Esophagus muscularis mucosa (tissue), 4 donors: ENCODE measurements at regions of chr15 and their contacts with region 1.

Region 1: DNA sequence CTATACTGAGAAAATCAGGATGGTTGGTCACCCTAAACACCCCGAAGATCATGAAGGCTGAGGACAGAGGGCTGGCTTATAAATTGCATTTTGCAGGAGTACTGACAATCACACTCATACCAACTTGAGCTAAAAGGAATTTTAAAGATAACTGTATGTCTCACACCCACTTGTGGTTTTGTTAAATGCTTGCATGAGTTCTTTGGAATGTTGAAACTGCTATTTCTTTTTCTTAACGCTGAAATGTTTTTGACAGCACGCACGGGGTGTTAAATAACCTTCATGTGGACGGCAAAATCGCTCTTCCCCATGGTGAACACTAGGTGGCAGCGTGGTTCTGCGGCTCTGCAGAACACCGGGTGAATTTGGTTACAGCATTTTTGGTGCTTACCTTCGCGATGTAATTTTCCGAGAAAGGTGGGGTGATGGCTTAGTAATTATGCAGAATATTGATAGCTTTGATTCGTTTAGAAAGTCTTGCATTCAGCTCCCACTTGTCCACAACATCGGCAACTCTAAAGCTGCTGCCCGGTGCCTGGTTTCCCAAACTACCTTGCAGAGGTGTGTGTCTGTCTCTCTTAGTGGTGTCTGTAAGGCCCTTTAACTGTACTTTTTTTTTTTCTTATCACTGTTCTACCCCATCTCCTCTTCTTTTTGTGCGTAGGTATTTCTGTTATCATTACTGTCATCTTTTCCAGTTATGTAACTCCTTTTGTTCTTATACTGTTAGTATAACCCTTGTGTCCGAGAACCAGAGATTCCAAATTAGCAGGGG is 51.7 kb downstream of the ARNT2 start:
- DNase-seq: no peak
- H3K4me3 ChIP-seq: no peak overlapping the region
- H3K27ac ChIP-seq: no peak overlapping the region
- H3K4me1 ChIP-seq: peaks cover 0 to 25% (median 22%) of the 10 kb centered on the region in 4 donors
- H3K27me3 ChIP-seq: no peaks in the 10 kb centered on the region
- CTCF ChIP-seq: peak; percentile 93 to 95 (median 95)
- EP300 ChIP-seq: no peak
- POLR2A ChIP-seq: no peak

Region 2: GRCh38 chr15:80502782-80503181 is 46.9 kb after region 1 on chr15:
- intact Hi-C with region 1: no loop called
- DNase-seq: peak; percentile 90
- H3K4me3 ChIP-seq: no peak overlapping the region
- H3K27ac ChIP-seq: peak overlapping the region in 3 of 4 donors; percentile 9 to 52 (median 27)
- H3K4me1 ChIP-seq: peaks cover 3 to 38% (median 24%) of the 10 kb centered on the region in 4 donors
- H3K27me3 ChIP-seq: no peaks in the 10 kb centered on the region
- CTCF ChIP-seq: no peak
- EP300 ChIP-seq: no peak
- POLR2A ChIP-seq: no peak

Region 3: DNA sequence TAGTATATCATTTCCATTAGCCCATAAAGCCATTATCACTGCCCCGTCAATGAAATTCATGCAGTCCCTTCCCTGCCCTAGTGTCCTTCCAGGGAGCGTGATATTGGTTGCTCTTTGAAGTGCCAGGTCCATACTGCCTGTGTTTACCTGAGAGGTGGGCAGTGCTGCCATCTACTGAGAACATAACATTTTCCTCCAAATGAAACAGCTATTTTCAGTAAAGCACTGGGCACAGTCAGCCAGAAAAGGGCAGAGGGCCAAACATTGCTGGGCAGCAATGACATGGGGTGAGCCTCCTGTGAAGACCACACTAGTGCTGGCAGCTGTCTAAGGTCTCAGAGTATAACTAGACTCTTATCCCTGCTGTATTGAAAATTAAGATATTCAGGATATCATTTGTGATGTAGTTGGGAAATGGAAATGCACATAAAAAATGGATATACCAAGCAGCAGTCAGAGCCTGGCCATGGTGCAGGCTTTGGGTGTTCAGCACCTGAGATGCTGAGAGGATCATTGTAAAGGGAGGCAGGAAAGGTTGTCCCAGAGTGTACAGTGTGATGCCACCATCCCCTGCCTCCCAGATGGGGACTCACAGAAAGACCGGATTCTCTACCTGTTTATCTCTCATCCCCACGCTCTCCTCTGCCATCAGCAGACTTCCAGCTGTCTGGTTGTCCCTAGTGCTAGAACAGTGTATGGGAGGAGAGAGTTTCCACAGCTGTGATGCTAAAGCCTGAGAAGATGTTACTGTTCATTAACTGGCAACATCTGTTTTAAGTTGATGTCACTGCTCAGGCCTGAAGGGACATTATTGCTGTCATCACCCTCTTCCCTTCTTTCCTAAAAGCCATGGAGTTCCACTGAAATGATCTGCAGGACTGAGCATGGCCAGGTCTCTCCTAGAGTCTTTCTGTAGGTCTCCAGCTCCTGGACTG is 57.1 kb after region 1 on chr15:
- intact Hi-C with region 1: loop called (anchors 1 kb)
- DNase-seq: peak; percentile 84
- H3K4me3 ChIP-seq: no peak overlapping the region
- H3K27ac ChIP-seq: no peak overlapping the region
- H3K4me1 ChIP-seq: peaks cover 6 to 19% (median 7%) of the 10 kb centered on the region in 4 donors
- H3K27me3 ChIP-seq: no peaks in the 10 kb centered on the region
- CTCF ChIP-seq: peak; percentile 20 to 44 (median 21)
- EP300 ChIP-seq: no peak
- POLR2A ChIP-seq: no peak

Region 4: GRCh38 chr15:80567721-80568157 is 111.9 kb after region 1 on chr15:
- intact Hi-C with region 1: loop called (anchors 2 kb)
- DNase-seq: no peak
- H3K4me3 ChIP-seq: no peak overlapping the region
- H3K27ac ChIP-seq: no peak overlapping the region
- H3K4me1 ChIP-seq: peaks cover 0 to 12% (median 8%) of the 10 kb centered on the region in 4 donors
- H3K27me3 ChIP-seq: no peaks in the 10 kb centered on the region
- CTCF ChIP-seq: peak; percentile 62 to 73 (median 62)
- EP300 ChIP-seq: no peak
- POLR2A ChIP-seq: no peak

Region 5: GRCh38 chr15:80615761-80616391 is 160.0 kb after region 1 on chr15:
- intact Hi-C with region 1: loop called (anchors 5 kb)
- DNase-seq: peak; percentile 92
- H3K4me3 ChIP-seq: no peak overlapping the region
- H3K27ac ChIP-seq: peak overlapping the region in 3 of 4 donors; percentile 32 to 58 (median 44)
- H3K4me1 ChIP-seq: peaks cover 9 to 23% (median 13%) of the 10 kb centered on the region in 4 donors
- H3K27me3 ChIP-seq: no peaks in the 10 kb centered on the region
- CTCF ChIP-seq: no peak
- EP300 ChIP-seq: no peak
- POLR2A ChIP-seq: no peak

Region 6: GRCh38 chr15:80776420-80777045 is 320.7 kb after region 1 on chr15:
- intact Hi-C with region 1: loop called (anchors 1 kb)
- DNase-seq: peak; percentile 93
- H3K4me3 ChIP-seq: no peak overlapping the region
- H3K27ac ChIP-seq: no peak overlapping the region
- H3K4me1 ChIP-seq: peaks cover 27 to 38% (median 32%) of the 10 kb centered on the region in 4 donors
- H3K27me3 ChIP-seq: peaks cover 0 to 36% (median 18%) of the 10 kb centered on the region in 4 donors
- CTCF ChIP-seq: peak; percentile 81 to 87 (median 84)
- EP300 ChIP-seq: no peak
- POLR2A ChIP-seq: no peak

Region 7: DNA sequence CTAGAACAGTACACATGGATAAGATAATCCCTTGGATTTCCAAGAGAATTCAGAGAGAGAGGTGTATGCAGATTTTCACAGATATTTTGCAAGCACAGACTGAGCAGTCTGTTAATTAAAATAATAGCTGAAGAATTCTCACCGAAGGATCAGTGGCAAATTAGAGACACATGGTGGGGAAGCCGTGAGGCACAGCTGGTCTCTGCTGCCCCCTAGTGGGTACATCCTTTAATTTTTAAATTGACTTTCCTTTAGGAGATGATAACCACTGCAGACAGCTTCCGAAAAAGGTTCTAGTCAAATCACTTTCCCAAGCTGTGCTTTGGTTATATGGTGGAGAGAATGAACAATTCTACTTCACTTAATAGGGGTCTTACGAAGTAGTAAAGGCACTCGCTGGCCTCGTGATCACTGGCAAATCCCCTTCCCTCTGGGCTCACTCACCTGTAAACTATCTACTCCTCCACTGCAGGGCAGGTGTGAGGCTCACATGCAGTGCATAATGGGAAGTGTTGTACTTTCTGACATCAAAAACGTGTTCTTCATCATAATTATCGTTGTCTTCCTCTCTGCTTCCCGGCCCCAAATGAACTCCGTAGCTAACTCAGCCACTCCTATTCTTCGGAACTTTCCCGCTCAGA is 514.3 kb after region 1 on chr15:
- intact Hi-C with region 1: loop called (anchors 2 kb)
- DNase-seq: no peak
- H3K4me3 ChIP-seq: no peak overlapping the region
- H3K27ac ChIP-seq: no peak overlapping the region
- H3K4me1 ChIP-seq: peaks cover 4 to 19% (median 15%) of the 10 kb centered on the region in 4 donors
- H3K27me3 ChIP-seq: no peaks in the 10 kb centered on the region
- CTCF ChIP-seq: peak; percentile 76 to 88 (median 86)
- EP300 ChIP-seq: no peak
- POLR2A ChIP-seq: no peak